RWPE1 (cell line): ENCODE measurements at regions of chr6 and their contacts with region 1.

Region 1: DNA sequence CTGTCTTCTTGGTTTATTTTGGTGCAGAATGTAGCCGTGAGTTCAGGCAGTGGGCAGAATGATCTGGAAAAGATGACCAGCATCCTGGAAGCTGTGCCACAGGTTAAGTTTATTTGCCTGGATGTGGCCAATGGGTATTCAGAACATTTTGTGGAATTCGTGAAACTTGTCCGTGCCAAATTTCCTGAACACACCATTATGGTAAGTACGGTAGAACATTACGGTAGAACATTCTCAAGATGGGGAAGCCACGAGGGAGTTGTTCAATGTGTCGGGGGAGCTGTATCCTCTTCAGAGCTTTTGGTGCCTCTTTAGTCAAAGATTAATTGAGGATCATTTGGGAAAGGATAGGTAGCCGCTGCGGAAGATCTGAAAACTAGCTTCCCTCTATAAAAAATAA is 16.1 kb downstream of the GMPR start:
- DNase-seq: no peak
- H3K27ac ChIP-seq: no peak overlapping the region
- CTCF ChIP-seq: no peak

Region 2: GRCh38 chr6:15513131-15513771 is 741.3 kb before region 1 on chr6:
- CTCF ChIA-PET with region 1: interaction called, 12 read pairs
- POLR2A ChIA-PET with region 1: no interaction called
- DNase-seq: no peak
- H3K27ac ChIP-seq: peak overlapping the region; percentile 18
- CTCF ChIP-seq: no peak

Region 3: GRCh38 chr6:16216501-16217155 is 37.9 kb before region 1 on chr6:
- CTCF ChIA-PET with region 1: no interaction called
- POLR2A ChIA-PET with region 1: no interaction called
- DNase-seq: no peak
- H3K27ac ChIP-seq: no peak overlapping the region
- CTCF ChIP-seq: no peak